Adrenal gland (tissue), 19 donors: ENCODE measurements at regions of chr19 and their contacts with region 1.

Region 1: DNA sequence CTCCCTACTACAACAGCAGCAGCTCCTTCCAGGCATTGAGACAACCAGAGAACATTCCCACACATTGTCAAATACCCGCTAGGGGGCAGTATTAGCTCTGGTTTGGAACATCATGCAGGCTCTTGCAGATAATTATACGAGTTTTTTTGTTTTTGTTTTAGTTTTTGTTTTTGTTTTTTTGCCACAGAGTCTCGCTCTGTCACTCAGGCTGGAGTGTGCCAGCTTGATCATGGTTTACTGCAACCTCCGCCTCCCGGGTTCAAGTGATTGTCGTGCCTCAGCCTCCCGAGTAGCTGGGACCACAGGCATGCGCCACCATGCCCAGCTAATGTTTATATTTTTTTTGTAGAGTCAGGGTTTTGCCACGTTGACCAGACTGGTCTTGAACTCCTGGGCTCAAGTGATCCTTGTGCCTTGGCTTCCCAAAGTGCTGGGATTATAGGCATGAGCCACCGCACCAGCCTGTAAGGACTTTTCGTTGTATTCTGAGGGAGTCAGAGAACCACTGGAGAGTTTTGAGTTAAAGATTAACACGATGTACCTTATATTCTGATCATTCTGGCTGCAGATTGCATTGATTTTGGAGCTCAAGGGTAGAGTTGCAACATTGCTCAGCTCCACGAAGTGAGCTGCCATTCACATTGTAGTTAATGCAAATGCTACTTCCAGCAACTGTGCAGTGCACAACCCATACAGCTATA is 41.7 kb upstream of the CEACAM20 start:
- DNase-seq: peak; percentile 73 to 91 (median 82)
- H3K4me3 ChIP-seq: no peak overlapping the region
- H3K27ac ChIP-seq: no peak overlapping the region
- H3K4me1 ChIP-seq: peaks cover 23 to 33% of the 10 kb centered on the region in 2 donors
- H3K27me3 ChIP-seq: no peaks in the 10 kb centered on the region
- CTCF ChIP-seq: peak; percentile 70 to 87 (median 82)
- POLR2A ChIP-seq: no peak

Region 2: DNA sequence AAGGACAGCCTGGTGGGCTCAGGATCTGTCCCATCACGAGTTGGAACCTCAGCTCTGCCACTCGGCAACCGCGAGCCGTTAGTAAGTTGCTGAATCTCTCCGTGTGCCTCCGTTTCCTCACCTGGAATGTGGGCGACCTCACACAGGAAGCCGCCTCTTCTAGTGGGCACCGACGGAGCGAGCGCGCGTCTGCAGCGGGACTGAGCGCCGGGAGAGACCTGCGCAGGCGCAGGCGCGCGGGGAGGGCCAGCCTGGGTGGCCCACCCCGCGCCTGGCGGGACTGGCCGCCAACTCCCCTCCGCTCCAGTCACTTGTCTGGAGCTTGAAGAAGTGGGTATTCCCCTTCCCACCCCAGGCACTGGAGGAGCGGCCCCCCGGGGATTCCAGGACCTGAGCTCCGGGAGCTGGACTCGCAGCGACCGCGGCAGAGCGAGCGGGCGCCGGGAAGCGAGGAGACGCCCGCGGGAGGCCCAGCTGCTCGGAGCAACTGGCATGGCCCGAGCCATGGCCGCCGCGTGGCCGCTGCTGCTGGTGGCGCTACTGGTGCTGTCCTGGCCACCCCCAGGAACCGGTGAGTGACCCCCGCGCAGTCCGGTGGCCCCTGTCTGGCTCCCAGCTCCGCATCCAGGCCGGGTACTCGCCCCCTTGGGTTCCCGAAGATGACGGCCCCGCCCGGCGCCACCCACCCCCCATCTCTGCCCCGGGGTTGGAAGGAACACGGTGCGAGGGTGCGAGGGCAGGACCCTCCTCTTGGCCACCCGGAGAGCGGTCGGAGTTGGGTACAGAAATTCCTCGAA is 72.7 kb after region 1 on chr19 and contains the start of gene PVR:
- intact Hi-C with region 1: loop called in 1 of 2 experiments (anchors 5 kb)
- DNase-seq: peak; percentile 73 to 82 (median 77)
- H3K4me3 ChIP-seq: peak within 1 kb of the TSS; percentile 53 to 89 (median 80)
- H3K27ac ChIP-seq: peak within 1 kb of the TSS; percentile 55 to 95 (median 92)
- H3K4me1 ChIP-seq: peaks cover 23 to 32% of the 10 kb centered on the region in 2 donors
- H3K27me3 ChIP-seq: no peaks in the 10 kb centered on the region
- CTCF ChIP-seq: no peak
- POLR2A ChIP-seq: peak; percentile 82 to 84
- total RNA-seq, gene PVR: 31.9 to 57.8 (median 45.0) TPM